CD8-positive, alpha-beta memory T cell (primary cell): ENCODE measurements at regions of chr1 and their contacts with region 1.

Region 1: GRCh38 chr1:235866913-235867845 is 473 bp upstream of the LYST start:
- DNase-seq: peak; percentile 95 to 99 (median 99)
- H3K4me3 ChIP-seq: peak overlapping the region; percentile 84
- H3K4me3 Mint-ChIP-seq: peak overlapping the region; percentile 82 to 98 (median 94)
- H3K27ac ChIP-seq: peak overlapping the region; percentile 99
- H3K27ac Mint-ChIP-seq: peak overlapping the region; percentile 91 to 100 (median 99)
- H3K4me1 ChIP-seq: peaks cover 34% of the 10 kb centered on the region
- H3K4me1 Mint-ChIP-seq: peaks cover 29 to 62% (median 50%) of the 10 kb centered on the region in 3 donors
- H3K27me3 ChIP-seq: no peaks in the 10 kb centered on the region
- H3K27me3 Mint-ChIP-seq: peaks cover 0 to 10% of the 10 kb centered on the region in 2 donors

Region 2: GRCh38 chr1:235614442-235614954 is 252.7 kb before region 1 on chr1:
- CTCF ChIA-PET with region 1: no interaction called
- POLR2A ChIA-PET with region 1: no interaction called
- DNase-seq: no peak
- H3K4me3 ChIP-seq: no peak overlapping the region
- H3K4me3 Mint-ChIP-seq: no peak overlapping the region
- H3K27ac ChIP-seq: no peak overlapping the region
- H3K27ac Mint-ChIP-seq: peak overlapping the region in 1 of 8 donors; percentile 74
- H3K4me1 ChIP-seq: no peaks in the 10 kb centered on the region
- H3K4me1 Mint-ChIP-seq: no peaks in the 10 kb centered on the region
- H3K27me3 ChIP-seq: no peaks in the 10 kb centered on the region
- H3K27me3 Mint-ChIP-seq: peaks cover 0 to 5% of the 10 kb centered on the region in 2 donors

Region 3: GRCh38 chr1:235843461-235843961 is 23.7 kb before region 1 on chr1:
- CTCF ChIA-PET with region 1: interaction called, 11 read pairs
- POLR2A ChIA-PET with region 1: no interaction called
- DNase-seq: no peak
- H3K4me3 ChIP-seq: no peak overlapping the region
- H3K4me3 Mint-ChIP-seq: no peak overlapping the region
- H3K27ac ChIP-seq: no peak overlapping the region
- H3K27ac Mint-ChIP-seq: peak overlapping the region in 2 of 8 donors; percentile 24 to 35
- H3K4me1 ChIP-seq: peaks cover 16% of the 10 kb centered on the region
- H3K4me1 Mint-ChIP-seq: peaks cover 68 to 87% (median 71%) of the 10 kb centered on the region in 3 donors
- H3K27me3 ChIP-seq: no peaks in the 10 kb centered on the region
- H3K27me3 Mint-ChIP-seq: no peaks in the 10 kb centered on the region

Region 4: GRCh38 chr1:235878082-235878811 is 11.1 kb after region 1 on chr1:
- CTCF ChIA-PET with region 1: interaction called, 7 read pairs
- POLR2A ChIA-PET with region 1: interaction called, 17 read pairs
- DNase-seq: no peak
- H3K4me3 ChIP-seq: no peak overlapping the region
- H3K4me3 Mint-ChIP-seq: peak overlapping the region in 2 of 7 donors; percentile 20 to 68
- H3K27ac ChIP-seq: no peak overlapping the region
- H3K27ac Mint-ChIP-seq: peak overlapping the region; percentile 6 to 86 (median 58)
- H3K4me1 ChIP-seq: peaks cover 16% of the 10 kb centered on the region
- H3K4me1 Mint-ChIP-seq: peaks cover 57 to 66% (median 62%) of the 10 kb centered on the region in 3 donors
- H3K27me3 ChIP-seq: no peaks in the 10 kb centered on the region
- H3K27me3 Mint-ChIP-seq: no peaks in the 10 kb centered on the region